Colonic mucosa (tissue), 4 donors: ENCODE measurements at regions of chr17 and their contacts with region 1.

Region 1: DNA sequence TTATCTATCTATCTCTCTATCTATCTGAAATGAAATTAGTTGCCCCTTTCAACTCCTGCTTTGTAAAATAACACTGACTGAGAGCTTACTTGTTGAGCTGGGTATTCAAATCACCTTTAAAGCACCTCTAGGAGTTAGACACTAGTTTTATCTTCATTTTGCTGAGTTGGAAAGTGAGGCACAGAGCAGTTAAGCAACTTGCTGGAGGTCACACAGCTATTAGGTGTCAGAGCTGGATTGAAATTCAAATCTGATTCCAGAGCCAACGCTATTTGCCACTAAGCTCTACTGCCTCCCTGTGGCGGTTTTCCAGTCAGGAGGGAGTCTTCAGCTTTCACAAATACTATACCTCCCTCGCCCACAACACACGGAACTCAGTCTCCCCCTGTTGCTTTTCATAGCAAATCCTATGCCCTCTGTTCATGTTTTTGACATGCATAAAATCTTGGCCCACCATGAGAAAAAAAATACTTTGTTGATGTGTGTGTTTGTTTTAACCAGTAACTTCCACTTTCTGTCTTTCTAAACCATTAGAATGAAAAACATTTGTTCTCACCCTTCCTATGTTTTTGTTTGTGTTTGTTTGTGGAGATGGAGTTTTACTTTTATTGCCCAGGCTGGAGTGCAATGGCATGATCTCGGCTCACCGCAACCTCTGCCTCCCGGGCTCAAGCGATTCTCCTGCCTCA is 74.8 kb upstream of the SMURF2 start:
- DNase-seq: peak; percentile 62
- H3K4me3 ChIP-seq: no peak overlapping the region
- H3K27ac ChIP-seq: no peak overlapping the region
- H3K4me1 ChIP-seq: no peaks in the 10 kb centered on the region
- H3K27me3 ChIP-seq: no peaks in the 10 kb centered on the region
- CTCF ChIP-seq: peak; percentile 63

Region 2: DNA sequence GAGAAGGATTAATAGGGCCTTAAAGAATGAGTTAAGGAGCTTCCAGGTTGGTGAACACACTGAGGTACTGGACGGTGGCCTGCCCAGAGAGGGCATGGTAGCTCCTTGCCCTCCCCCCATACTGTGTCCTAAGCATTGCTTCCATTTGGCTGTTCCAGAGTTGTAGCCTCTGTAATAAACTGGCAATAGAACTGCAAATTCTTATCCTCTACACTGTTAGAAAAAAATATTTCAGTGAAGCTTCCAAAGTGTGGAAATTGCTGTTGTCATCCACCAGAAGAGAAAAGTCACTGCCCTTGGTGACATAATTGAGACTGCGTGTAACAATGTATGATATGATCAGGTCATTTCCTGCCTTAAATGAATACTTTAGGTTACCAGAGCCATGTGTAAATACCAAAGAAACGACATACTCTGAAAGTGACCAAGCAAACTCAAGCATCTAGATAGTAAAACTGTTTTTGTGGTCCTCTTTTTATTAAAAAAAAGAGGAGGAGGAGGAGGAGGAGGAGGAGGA is 164.3 kb before region 1 on chr17:
- intact Hi-C with region 1: no loop called
- DNase-seq: no peak
- H3K4me3 ChIP-seq: no peak overlapping the region
- H3K27ac ChIP-seq: no peak overlapping the region
- H3K4me1 ChIP-seq: no peaks in the 10 kb centered on the region
- H3K27me3 ChIP-seq: no peaks in the 10 kb centered on the region
- CTCF ChIP-seq: no peak

Region 3: GRCh38 chr17:64582879-64583632 is 153.9 kb before region 1 on chr17:
- intact Hi-C with region 1: no loop called
- DNase-seq: no peak
- H3K4me3 ChIP-seq: no peak overlapping the region
- H3K27ac ChIP-seq: no peak overlapping the region
- H3K4me1 ChIP-seq: no peaks in the 10 kb centered on the region
- H3K27me3 ChIP-seq: no peaks in the 10 kb centered on the region
- CTCF ChIP-seq: no peak

Region 4: DNA sequence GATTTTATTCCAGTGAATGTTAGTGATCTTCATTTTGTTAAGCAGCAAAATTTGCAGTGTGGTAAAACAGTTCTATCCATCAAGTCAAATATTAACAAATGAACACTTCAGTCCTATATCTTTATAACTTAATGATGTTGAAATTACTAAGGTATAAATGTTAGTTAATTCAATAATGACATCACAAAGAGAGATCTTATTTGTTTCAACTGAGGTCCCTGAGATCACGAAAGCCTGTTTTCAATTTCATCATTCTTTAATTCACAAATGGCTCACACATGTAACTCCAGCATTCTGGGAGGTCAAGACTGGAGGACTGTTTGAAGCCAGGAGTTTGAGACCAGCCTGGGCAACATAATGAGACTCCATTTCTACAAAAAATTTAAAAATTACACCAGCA is 88.7 kb before region 1 on chr17:
- intact Hi-C with region 1: no loop called
- DNase-seq: no peak
- H3K4me3 ChIP-seq: no peak overlapping the region
- H3K27ac ChIP-seq: no peak overlapping the region
- H3K4me1 ChIP-seq: no peaks in the 10 kb centered on the region
- H3K27me3 ChIP-seq: no peaks in the 10 kb centered on the region
- CTCF ChIP-seq: no peak

Region 5: DNA sequence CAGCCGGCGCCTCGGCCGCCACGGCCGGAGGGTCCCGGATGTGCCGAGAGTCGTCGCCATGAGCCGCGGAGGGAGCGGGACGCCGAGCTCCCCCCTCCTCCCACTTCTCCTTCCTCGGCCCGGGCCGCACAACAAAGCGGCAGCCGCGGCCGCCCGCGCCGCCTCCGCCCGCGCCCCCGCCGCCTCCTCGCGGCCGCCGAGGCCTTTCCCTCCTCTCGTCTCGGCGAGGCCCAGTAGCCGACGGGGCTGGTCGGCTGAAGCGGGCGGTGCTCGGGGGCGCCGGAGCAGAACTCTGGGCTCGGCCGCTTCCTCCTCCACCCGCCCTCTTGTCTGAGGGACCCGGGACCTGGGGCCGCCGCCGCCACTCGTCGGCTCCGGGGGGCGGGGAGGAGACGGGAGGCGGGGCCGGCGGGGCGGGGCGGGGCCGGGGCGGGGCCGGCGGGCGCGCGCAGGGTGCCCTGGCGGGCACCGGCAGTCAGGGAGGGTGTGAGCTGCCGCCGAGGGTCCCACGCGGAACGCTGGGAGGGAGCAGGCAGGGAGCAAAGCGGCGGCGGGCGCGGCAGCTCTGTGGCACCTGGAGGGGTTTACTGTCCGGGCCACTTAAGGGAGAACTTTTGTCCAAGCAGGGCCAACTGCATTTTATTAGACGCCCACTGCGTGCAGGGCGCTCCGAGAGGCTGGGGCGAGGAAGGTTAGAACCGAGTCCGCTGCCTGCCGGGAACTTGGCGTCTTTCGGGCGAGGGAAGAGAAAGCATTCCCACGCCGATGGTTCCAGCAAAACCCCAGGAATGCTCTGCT is 74.8 kb before region 1 on chr17 and contains the start of gene SMURF2:
- intact Hi-C with region 1: loop called (anchors 10 kb)
- DNase-seq: peak; percentile 84
- H3K4me3 ChIP-seq: peak within 1 kb of the TSS; percentile 66
- H3K27ac ChIP-seq: peak within 1 kb of the TSS; percentile 92
- H3K4me1 ChIP-seq: no peaks in the 10 kb centered on the region
- H3K27me3 ChIP-seq: no peaks in the 10 kb centered on the region
- CTCF ChIP-seq: no peak
- total RNA-seq, gene SMURF2: 10.6 to 18.6 TPM